Gastrocnemius medialis (tissue), 4 donors: ENCODE measurements at regions of chr1 and their contacts with region 1.

Region 1: GRCh38 chr1:161749509-161750407 is at the start of gene DUSP12:
- DNase-seq: peak; percentile 87 to 89
- ATAC-seq: peak; percentile 98 to 99
- H3K4me3 ChIP-seq: peak within 1 kb of the TSS; percentile 66 to 96 (median 92)
- H3K27ac ChIP-seq: peak within 1 kb of the TSS; percentile 77 to 89 (median 82)
- H3K4me1 ChIP-seq: peaks cover 7 to 19% of the 10 kb centered on the region in 2 donors
- H3K27me3 ChIP-seq: no peaks in the 10 kb centered on the region
- CTCF ChIP-seq: no peak
- POLR2A ChIP-seq: peak in 1 of 2 donors; percentile 16
- total RNA-seq, gene DUSP12: 5.0 to 15.0 (median 10.0) TPM

Region 2: DNA sequence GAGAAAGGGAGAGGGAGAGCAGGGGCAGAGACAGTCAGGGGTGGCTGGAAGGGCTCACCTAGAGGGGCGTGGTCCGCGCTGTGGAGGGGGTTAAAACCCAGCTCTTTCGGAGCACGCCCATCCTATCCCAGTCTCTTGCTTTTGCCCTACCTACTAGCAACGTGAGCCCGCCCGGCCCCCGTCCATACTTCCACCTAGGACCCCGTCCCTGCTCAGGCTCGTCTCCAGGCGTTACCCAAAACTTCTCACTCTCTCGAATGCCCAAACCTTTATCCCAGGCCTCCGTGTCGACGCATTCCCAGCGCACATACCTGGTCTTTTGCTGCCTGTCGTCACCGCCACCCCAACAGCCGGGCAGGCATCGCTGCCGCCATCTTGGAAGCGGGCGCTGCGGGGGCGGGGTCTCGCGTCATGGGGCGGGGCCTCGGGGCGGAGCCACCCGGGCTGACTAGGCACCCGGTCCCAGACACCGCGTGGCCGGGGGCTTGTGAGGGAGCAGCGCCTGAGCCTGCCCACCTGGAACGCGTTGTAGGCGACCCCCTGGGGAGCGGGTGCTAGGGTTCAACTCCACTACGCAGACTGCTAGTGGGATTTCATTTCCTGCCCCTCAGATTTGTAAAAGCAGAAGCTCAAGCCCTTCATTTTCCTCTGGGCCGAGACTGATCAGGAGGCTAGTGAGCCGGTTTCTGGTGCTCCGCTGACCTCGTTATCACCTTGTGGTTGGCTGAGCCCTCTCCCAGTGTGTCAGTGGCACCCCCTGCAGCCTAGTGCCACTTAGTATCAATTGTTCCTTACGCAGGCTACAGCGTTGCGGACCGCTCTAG is 572.4 kb before region 1 on chr1 and contains the start of gene B4GALT3:
- in situ Hi-C with region 1: loop called in 1 of 4 experiments (anchors 25 kb)
- intact Hi-C with region 1: no loop called
- DNase-seq: peak; percentile 84 to 85
- ATAC-seq: peak; percentile 92 to 94
- H3K4me3 ChIP-seq: peak within 1 kb of the TSS; percentile 72 to 92 (median 80)
- H3K27ac ChIP-seq: peak within 1 kb of the TSS; percentile 87 to 91 (median 89)
- H3K4me1 ChIP-seq: peaks cover 18 to 21% of the 10 kb centered on the region in 2 donors
- H3K27me3 ChIP-seq: no peaks in the 10 kb centered on the region
- CTCF ChIP-seq: no peak
- POLR2A ChIP-seq: peak; percentile 90 to 93
- total RNA-seq, gene B4GALT3: 35.5 to 47.7 (median 43.7) TPM

Region 3: GRCh38 chr1:161201828-161202725 is 547.7 kb before region 1 on chr1 and contains the start of gene NDUFS2:
- in situ Hi-C with region 1: loop called in 3 of 4 experiments (anchors 25 kb)
- intact Hi-C with region 1: no loop called
- DNase-seq: peak; percentile 99
- ATAC-seq: peak; percentile 97
- H3K4me3 ChIP-seq: peak within 1 kb of the TSS; percentile 66 to 93 (median 84)
- H3K27ac ChIP-seq: peak within 1 kb of the TSS; percentile 94 to 99 (median 98)
- H3K4me1 ChIP-seq: peaks cover 58 to 81% of the 10 kb centered on the region in 2 donors
- H3K27me3 ChIP-seq: no peaks in the 10 kb centered on the region
- CTCF ChIP-seq: peak in 1 of 5 experiments; percentile 18
- POLR2A ChIP-seq: peak; percentile 82 to 86
- total RNA-seq, gene NDUFS2: 206 to 260 (median 226) TPM

Region 4: GRCh38 chr1:161486806-161487741 is 262.7 kb before region 1 on chr1:
- in situ Hi-C with region 1: loop called in 2 of 4 experiments (anchors 10 kb)
- intact Hi-C with region 1: no loop called
- DNase-seq: peak; percentile 14 to 27
- ATAC-seq: peak; percentile 56 to 64
- H3K4me3 ChIP-seq: no peak overlapping the region
- H3K27ac ChIP-seq: no peak overlapping the region
- H3K4me1 ChIP-seq: no peaks in the 10 kb centered on the region
- H3K27me3 ChIP-seq: peaks cover 9 to 31% (median 10%) of the 10 kb centered on the region in 3 donors
- CTCF ChIP-seq: peak; percentile 30 to 76 (median 54)
- POLR2A ChIP-seq: no peak

Region 5: GRCh38 chr1:161766102-161766981 is 16.6 kb after region 1 on chr1 and contains the start of gene ATF6:
- in situ Hi-C with region 1: no loop called
- intact Hi-C with region 1: loop called (anchors 1 kb)
- DNase-seq: peak; percentile 83 to 92
- ATAC-seq: peak; percentile 95 to 96
- H3K4me3 ChIP-seq: peak within 1 kb of the TSS; percentile 73 to 92 (median 83)
- H3K27ac ChIP-seq: peak within 1 kb of the TSS; percentile 91 to 94 (median 92)
- H3K4me1 ChIP-seq: peaks cover 32% of the 10 kb centered on the region in 2 donors
- H3K27me3 ChIP-seq: no peaks in the 10 kb centered on the region
- CTCF ChIP-seq: peak in 2 of 5 experiments; percentile 34 to 64
- POLR2A ChIP-seq: peak; percentile 80 to 86
- total RNA-seq, gene ATF6: 15.3 to 20.1 (median 18.3) TPM